A549 (cell line): ENCODE measurements at regions of chr15 and their contacts with region 1.

Region 1: DNA sequence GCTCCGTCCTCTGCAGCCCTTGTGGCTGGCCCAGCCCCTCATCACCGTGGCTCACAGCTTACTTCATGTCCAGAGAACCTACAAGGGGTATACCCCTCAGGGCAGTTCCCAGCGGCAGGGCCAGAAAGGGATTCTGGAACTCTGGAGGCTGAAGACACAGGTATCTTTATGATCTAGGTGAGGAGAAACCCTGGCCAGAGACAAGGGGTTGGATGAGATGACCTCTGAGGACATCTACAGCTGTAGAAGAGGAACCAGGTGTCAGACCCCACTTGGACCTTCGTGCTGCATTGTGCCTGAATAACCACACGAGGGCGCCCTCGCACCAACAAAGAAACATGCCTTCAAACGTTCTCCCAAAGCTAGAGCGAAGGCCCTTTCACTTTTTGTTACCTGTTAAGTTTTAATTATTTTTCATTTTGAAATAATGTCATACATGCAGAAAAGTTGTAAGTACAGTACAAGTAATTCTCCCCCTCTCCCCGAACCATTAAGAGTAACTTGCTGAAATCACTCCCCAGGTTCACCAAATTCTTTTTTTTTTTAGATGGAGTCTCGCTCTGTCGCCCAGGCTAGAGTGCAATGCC is 118.7 kb upstream of the SMAD3 start:
- DNase-seq: peak; percentile 83 to 92
- ATAC-seq: peak; percentile 72 to 77
- H3K4me3 ChIP-seq: no peak overlapping the region
- H3K27ac ChIP-seq: peak overlapping the region; percentile 60 to 82
- H3K4me1 ChIP-seq: peaks cover 39% of the 10 kb centered on the region
- CTCF ChIP-seq: peak; percentile 98
- EP300 ChIP-seq: no peak
- POLR2A ChIP-seq: no peak
- RAD21 ChIP-seq: peak; percentile 99

Region 2: DNA sequence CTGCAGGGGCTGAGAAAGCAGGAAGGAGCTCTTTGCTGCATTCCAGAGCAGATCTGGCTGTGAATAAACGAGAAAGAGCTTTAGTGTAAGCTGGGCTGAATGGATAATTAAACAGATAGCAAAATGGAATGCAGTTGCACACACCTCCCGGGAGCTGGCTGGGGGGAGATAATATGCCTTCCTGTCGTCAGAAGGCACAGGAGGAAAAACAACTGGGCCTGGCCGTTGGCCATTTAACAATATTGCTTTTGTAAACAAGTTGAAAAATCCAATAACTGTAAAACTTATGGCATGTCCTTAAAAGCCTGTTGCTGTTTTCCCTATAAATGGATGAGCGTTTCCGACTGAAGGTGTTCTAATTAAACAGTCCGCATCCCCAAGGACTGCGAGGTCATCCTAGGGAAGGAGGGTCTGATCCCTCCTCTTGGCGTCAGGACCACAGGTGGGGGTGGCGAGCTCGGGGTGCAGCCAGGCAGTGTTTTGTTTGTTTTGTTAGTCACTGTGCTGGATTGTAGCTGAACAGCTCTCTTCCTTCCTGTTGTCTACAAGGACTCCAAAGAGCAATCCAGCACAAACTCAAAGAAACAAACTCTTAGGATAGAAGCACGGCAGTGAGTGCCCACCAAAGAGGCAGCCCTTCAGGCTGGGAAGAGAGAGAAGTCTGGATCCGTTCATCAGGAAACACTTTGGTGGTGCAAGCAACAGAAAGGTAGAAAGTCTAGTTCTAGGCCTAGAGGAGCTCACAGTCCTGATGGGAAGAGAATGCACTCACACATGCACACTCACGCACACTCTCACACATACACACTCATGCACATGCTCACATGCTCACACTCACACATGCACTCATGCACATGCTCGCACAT is 14.7 kb before region 1 on chr15:
- CTCF ChIA-PET with region 1: interaction called, 128 read pairs
- POLR2A ChIA-PET with region 1: interaction called, 7 read pairs
- DNase-seq: peak; percentile 96 to 97
- ATAC-seq: peak; percentile 97
- H3K4me3 ChIP-seq: peak overlapping the region; percentile 2; the same call in 1 of the 3 replicates
- H3K27ac ChIP-seq: peak overlapping the region; percentile 91 to 93
- H3K4me1 ChIP-seq: peaks cover 46% of the 10 kb centered on the region
- CTCF ChIP-seq: no peak
- EP300 ChIP-seq: peak; percentile 76 to 88; a peak in 4 of 5 replicates
- POLR2A ChIP-seq: no peak
- RAD21 ChIP-seq: peak in 1 of 2 experiments; percentile 44; a peak in 4 of 5 replicates

Region 3: GRCh38 chr15:67024314-67024997 is 77.8 kb after region 1 on chr15:
- CTCF ChIA-PET with region 1: interaction called, 16 read pairs
- POLR2A ChIA-PET with region 1: no interaction called
- DNase-seq: peak; percentile 88 to 94
- ATAC-seq: peak; percentile 87 to 89
- H3K4me3 ChIP-seq: no peak overlapping the region
- H3K27ac ChIP-seq: peak overlapping the region; percentile 75 to 89
- H3K4me1 ChIP-seq: peaks cover 55% of the 10 kb centered on the region
- CTCF ChIP-seq: no peak
- EP300 ChIP-seq: peak; percentile 68; a peak in 2 of 5 replicates
- POLR2A ChIP-seq: no peak
- RAD21 ChIP-seq: peak; percentile 33 to 55; a peak in 3 of 5 replicates

Region 4: GRCh38 chr15:67085818-67086636 is 139.4 kb after region 1 on chr15:
- CTCF ChIA-PET with region 1: interaction called, 18 read pairs
- POLR2A ChIA-PET with region 1: no interaction called
- DNase-seq: no peak
- ATAC-seq: no peak
- H3K4me3 ChIP-seq: no peak overlapping the region
- H3K27ac ChIP-seq: peak overlapping the region; percentile 31 to 82; a peak in 5 of 6 replicates
- H3K4me1 ChIP-seq: peaks cover 100% of the 10 kb centered on the region
- CTCF ChIP-seq: no peak
- EP300 ChIP-seq: no peak
- POLR2A ChIP-seq: no peak
- RAD21 ChIP-seq: no peak

Region 5: DNA sequence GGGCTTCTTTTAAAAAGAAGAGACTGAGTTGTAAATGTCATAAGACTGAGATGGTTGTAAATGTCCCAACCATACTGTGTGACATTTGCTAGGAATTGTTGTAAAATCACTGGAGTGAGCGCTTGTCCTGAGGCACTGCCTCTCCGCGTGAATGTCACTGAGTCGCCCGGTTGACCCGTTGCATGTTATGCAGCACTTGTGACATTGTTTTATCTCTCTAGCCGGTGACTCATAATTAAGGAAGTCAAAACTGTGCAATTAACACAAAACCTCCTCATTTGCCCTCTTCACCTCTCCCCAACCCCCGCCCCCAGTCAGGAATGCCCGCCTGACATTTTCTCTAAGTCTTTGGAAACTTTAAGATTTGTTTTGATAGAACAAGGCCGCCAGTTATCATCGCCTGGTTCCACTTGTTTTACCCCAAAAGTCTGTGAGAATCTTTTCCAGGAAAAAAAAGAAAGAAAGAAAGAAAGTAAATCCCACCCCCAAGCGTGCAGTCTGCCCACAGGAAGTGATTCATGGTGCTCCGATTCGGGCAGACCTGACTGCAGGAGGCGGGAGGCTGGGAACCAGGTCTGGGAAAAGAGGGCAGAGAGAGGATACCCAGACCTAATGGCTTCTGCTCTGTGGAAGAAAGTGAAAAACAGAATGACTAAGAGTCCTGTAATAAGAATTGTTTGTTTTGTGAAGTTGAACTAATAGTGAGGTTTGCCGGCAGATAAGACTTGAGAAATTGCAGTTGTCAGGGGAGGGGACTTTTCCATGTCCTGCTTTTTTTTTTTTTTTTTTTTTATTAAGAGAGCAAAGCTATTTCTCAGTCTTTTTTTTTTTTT is 203.6 kb after region 1 on chr15:
- CTCF ChIA-PET with region 1: interaction called, 28 read pairs
- POLR2A ChIA-PET with region 1: interaction called, 4 read pairs
- DNase-seq: peak; percentile 97 to 98
- ATAC-seq: peak; percentile 81 to 83
- H3K4me3 ChIP-seq: peak overlapping the region; percentile 24; the same call in 2 of the 3 replicates
- H3K27ac ChIP-seq: peak overlapping the region; percentile 92
- H3K4me1 ChIP-seq: peaks cover 96% of the 10 kb centered on the region
- CTCF ChIP-seq: no peak
- EP300 ChIP-seq: peak; percentile 88 to 93; a peak in 3 of 5 replicates
- POLR2A ChIP-seq: no peak
- RAD21 ChIP-seq: peak; percentile 24 to 52; a peak in 4 of 5 replicates

Region 6: DNA sequence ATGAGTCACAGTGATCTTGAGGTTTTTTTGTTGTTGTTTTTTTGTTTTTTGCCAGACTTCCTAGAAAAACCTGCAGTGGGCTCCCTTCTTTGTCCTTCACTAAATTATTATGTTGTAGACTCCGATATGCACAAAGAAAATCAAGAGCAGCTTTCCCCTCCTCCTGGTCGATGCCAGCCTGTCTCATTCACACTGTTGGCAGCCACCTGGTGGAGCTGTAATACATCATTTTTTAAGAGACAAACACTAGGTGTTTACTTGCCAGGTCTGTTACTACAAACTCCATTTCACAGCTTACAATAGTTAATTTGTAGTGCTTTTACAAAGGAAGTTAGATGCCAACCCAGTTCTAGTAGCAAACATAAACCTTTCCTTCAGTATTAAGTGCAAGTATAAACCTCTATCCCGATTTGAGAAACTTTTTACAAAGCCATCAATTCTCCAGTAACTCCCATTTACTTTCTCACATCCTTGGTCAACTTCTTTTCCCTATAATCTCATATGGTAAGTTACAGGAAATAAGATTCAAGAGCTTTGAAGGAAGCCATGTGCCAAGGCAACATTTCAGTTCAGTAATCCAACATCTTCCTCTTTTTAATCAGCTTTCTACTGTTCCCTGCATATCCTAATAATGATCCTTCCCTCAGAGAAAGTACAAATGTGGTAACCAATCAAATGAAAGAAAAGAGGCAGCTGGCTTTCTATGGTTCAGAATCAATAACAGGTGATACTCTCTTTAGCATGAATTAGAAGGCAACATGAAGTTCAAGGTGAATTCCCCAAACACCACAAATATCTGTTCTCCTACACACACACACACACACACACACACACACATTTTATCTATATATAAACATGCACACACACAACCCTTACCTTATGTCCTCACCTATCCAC is 293.8 kb after region 1 on chr15:
- CTCF ChIA-PET with region 1: interaction called, 15 read pairs
- POLR2A ChIA-PET with region 1: no interaction called
- DNase-seq: peak; percentile 55 to 57
- ATAC-seq: peak; percentile 91 to 95
- H3K4me3 ChIP-seq: no peak overlapping the region
- H3K27ac ChIP-seq: no peak overlapping the region
- H3K4me1 ChIP-seq: peaks cover 41% of the 10 kb centered on the region
- CTCF ChIP-seq: peak; percentile 66
- EP300 ChIP-seq: no peak
- POLR2A ChIP-seq: no peak
- RAD21 ChIP-seq: peak; percentile 66 to 74